HepG2 (cell line): ENCODE measurements at regions of chr9 and their contacts with region 1.

Region 1: DNA sequence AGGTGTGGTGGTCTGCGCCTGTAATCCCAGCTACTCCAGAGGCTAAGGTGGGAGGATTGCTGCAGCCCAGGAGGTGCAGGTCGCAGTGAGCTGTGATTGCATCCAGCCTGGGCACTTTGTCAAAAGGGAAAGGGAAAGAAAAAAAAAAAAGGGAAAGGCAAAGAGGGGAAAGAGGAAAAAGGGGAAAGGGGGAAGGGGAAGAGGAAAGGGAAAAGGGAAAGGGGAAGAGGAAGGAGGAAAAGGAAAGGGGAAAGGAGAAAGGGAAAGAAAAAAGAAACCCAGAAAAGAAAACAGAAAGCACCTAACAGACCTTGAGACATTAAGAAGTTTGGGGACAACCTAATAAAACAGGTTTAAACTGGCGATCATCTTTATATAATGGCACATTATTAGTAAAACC is 40.0 kb downstream of the IDNK start:
- DNase-seq: no peak
- ATAC-seq: no peak
- H3K4me3 ChIP-seq: no peak overlapping the region
- H3K27ac ChIP-seq: no peak overlapping the region
- H3K4me1 ChIP-seq: no peaks in the 10 kb centered on the region
- H3K27me3 ChIP-seq: no peaks in the 10 kb centered on the region
- CTCF ChIP-seq: no peak
- EP300 ChIP-seq: no peak
- POLR2A ChIP-seq: no peak
- RAD21 ChIP-seq: no peak

Region 2: DNA sequence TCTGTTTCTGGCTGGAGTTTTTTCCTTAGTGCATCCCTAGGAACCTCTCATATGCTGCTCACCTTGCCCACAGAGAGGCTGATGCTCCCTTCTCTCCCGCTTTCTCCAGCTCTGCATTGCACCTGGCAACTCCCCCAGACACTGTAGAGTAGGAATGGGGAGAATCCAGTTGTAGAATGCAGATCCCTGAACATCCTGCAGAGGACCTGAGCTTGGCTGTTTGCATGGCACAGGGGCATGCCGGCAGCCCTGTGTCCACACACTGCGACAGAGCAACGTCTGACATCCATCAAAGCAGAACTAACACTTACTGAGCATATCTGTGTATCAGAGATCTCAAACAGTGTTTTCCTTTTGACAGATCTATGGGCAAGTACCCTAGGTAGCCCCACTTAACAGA is 20.1 kb before region 1 on chr9:
- CTCF ChIA-PET with region 1: no interaction called
- POLR2A ChIA-PET with region 1: no interaction called
- in situ Hi-C with region 1: no loop called
- intact Hi-C with region 1: no loop called
- DNase-seq: no peak
- ATAC-seq: peak; percentile 81
- H3K4me3 ChIP-seq: no peak overlapping the region
- H3K27ac ChIP-seq: no peak overlapping the region
- H3K4me1 ChIP-seq: peaks cover 3% of the 10 kb centered on the region
- H3K27me3 ChIP-seq: no peaks in the 10 kb centered on the region
- CTCF ChIP-seq: no peak
- EP300 ChIP-seq: no peak
- POLR2A ChIP-seq: no peak
- RAD21 ChIP-seq: no peak

Region 3: DNA sequence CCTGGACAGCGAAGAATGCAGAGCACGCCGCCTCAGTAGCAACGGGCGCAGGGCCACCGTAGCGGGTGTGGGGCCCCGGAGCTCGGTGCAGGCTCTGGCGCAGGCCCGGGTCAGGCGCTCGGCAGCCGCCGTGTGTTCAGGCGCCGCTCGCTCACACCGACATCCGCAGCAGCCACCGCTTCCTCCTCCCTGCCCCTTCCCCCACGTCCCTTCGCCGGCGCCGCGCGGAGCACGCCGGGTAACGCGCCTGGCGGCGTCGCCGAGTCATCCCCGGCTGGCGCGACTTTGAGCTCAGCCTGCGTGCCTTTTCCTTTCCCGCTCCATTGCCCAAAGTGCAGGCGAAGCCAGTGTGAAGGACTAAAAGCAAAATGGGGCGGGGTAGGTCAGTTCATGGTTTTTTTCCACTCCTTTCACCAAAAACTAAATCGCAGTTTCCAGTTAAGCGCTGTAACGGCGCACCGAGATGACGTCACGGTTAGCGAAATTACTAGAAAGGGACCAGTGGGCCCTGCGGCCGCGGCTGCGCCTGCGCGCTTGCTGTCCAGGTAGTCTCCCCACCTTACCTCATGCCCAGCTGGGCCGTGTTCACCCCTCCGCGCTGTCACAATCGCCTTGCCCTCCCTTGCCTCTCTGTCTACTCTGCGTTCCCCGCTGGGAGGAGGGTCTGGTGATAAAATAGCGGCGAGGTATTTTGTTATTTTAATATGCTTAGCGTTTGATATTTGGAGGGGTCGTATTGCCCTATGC is 45.0 kb after region 1 on chr9 and contains the start of gene UBQLN1:
- CTCF ChIA-PET with region 1: no interaction called
- POLR2A ChIA-PET with region 1: no interaction called
- in situ Hi-C with region 1: no loop called
- intact Hi-C with region 1: loop called (anchors 5 kb)
- DNase-seq: peak; percentile 88
- ATAC-seq: peak; percentile 88
- H3K4me3 ChIP-seq: peak within 1 kb of the TSS; percentile 82 to 99 (median 94)
- H3K27ac ChIP-seq: peak within 1 kb of the TSS; percentile 99
- H3K4me1 ChIP-seq: peaks cover 40% of the 10 kb centered on the region
- H3K27me3 ChIP-seq: no peaks in the 10 kb centered on the region
- CTCF ChIP-seq: peak; percentile 3; the same call in 1 of the 2 replicates
- EP300 ChIP-seq: peak in 1 of 2 experiments; percentile 40; a peak in 2 of 4 replicates
- POLR2A ChIP-seq: peak; percentile 87 to 96
- RAD21 ChIP-seq: peak; percentile 41; the same call in 1 of the 2 replicates
- total RNA-seq, gene UBQLN1: 83.8 and 99.6 TPM in 2 replicates